ENCODE measurements at regions of chr5 and their contacts with region 1.

Region 1: GRCh38 chr5:149114403-149115312 is 26.6 kb upstream of the ABLIM3 start:
- DNase-seq: peak; percentile 66

Region 2: DNA sequence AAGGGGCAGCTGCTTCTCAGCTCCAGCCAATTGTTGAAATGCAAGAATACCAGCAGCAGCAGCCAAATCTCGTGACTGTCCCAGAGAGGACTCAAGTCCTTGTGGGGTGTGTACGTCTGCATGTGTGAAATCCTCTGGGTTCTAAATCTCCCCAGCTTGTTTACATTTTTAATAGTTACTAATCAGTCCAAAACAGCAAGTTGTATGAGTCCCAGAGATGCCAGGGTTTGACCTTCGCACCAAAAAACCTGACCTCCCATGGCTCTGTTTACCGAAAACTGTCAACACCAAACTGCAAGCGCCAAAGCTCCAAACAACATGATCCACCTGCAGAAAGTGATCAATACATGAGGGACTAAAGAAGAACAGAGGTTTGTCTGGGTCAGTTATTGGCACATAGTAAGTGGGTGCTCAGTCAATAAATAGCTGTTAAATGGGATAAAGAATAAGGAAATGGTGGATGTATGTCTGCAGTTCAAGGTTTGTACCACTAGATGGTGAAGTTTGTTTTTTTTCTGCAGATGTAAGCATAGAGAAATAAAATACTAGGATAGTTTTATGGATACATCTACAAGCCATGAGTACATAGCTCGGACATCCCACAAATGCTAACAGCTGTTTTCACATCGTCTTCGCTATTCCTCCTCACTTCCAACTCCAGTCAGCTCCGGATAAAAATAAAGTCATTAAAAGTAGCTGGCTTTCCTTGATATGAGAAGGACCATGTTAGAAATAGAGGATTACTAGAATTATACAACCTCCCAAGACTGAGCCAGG is 373.5 kb before region 1 on chr5:
- CTCF ChIA-PET with region 1: interaction called, 24 read pairs
- POLR2A ChIA-PET with region 1: no interaction called
- DNase-seq: peak; percentile 27

Region 3: GRCh38 chr5:149130121-149130919 is 15.7 kb after region 1 on chr5:
- CTCF ChIA-PET with region 1: interaction called, 10 read pairs
- POLR2A ChIA-PET with region 1: no interaction called
- DNase-seq: no peak

Measured in HEK293T (cell line).